ENCODE measurements at regions of chr17 and their contacts with region 1.

Region 1: DNA sequence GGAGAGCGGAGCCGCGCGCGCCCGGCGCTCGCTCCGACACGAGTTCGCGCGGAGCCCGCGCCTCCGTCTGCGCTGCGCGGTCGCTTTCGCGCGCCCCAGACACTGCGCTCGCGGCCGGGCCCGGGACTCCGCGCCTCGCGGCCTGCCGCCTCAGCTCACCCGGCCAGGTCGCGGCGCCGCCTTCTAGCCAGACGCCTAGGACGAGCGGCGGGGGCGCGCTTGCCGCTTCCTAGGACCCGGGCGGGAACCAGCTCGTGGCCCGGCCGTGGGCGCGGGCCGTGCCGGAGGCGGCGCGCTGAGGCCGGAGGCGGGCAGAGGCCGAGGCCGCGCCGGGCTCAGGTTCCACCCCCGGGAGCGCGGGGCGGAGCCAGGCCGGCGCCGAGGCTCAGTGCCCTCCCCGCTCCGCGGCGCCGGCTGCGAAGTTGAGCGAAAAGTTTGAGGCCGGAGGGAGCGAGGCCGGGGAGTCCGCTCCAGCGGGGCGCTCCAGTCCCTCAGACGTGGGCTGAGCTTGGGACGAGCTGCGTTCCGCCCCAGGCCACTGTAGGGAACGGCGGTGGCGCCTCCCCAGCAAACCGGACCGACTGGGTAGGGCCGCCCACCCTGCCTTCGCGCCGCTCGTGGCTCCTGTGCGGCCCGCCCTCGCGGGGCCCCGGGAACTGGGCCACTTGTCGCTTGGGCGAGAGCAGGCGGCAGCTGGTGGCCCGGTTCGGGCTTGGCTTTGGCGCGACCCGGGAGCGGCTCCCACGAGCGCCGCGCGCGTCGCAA is at the start of gene SPHK1:
- DNase-seq: peak; percentile 95
- H3K4me3 Mint-ChIP-seq: peak within 1 kb of the TSS; percentile 92
- H3K27ac Mint-ChIP-seq: peak within 1 kb of the TSS; percentile 96
- H3K4me1 Mint-ChIP-seq: peaks cover 10% of the 10 kb centered on the region
- H3K27me3 Mint-ChIP-seq: no peaks in the 10 kb centered on the region
- total RNA-seq, gene SPHK1: 26.8 and 27.6 TPM in 2 replicates

Region 2: GRCh38 chr17:76048711-76049110 is 335.7 kb before region 1 on chr17:
- intact Hi-C with region 1: no loop called
- DNase-seq: no peak
- H3K4me3 Mint-ChIP-seq: no peak overlapping the region
- H3K27ac Mint-ChIP-seq: no peak overlapping the region
- H3K4me1 Mint-ChIP-seq: peaks cover 12% of the 10 kb centered on the region
- H3K27me3 Mint-ChIP-seq: no peaks in the 10 kb centered on the region

Region 3: GRCh38 chr17:76353599-76354316 is 30.6 kb before region 1 on chr17 and contains the start of gene PRPSAP1:
- intact Hi-C with region 1: loop called (anchors 1 kb)
- DNase-seq: peak; percentile 95
- H3K4me3 Mint-ChIP-seq: peak within 1 kb of the TSS; percentile 92
- H3K27ac Mint-ChIP-seq: peak within 1 kb of the TSS; percentile 99
- H3K4me1 Mint-ChIP-seq: peaks cover 25% of the 10 kb centered on the region
- H3K27me3 Mint-ChIP-seq: peaks cover 3% of the 10 kb centered on the region
- total RNA-seq, gene PRPSAP1: 37.2 and 45.2 TPM in 2 replicates

Region 4: GRCh38 chr17:76397687-76398487 is 13.5 kb after region 1 on chr17:
- intact Hi-C with region 1: loop called (anchors 1 kb)
- DNase-seq: peak; percentile 96
- H3K4me3 Mint-ChIP-seq: no peak overlapping the region
- H3K27ac Mint-ChIP-seq: no peak overlapping the region
- H3K4me1 Mint-ChIP-seq: no peaks in the 10 kb centered on the region
- H3K27me3 Mint-ChIP-seq: no peaks in the 10 kb centered on the region